ENCODE measurements at regions of chr5 and their contacts with region 1.

Region 1: DNA sequence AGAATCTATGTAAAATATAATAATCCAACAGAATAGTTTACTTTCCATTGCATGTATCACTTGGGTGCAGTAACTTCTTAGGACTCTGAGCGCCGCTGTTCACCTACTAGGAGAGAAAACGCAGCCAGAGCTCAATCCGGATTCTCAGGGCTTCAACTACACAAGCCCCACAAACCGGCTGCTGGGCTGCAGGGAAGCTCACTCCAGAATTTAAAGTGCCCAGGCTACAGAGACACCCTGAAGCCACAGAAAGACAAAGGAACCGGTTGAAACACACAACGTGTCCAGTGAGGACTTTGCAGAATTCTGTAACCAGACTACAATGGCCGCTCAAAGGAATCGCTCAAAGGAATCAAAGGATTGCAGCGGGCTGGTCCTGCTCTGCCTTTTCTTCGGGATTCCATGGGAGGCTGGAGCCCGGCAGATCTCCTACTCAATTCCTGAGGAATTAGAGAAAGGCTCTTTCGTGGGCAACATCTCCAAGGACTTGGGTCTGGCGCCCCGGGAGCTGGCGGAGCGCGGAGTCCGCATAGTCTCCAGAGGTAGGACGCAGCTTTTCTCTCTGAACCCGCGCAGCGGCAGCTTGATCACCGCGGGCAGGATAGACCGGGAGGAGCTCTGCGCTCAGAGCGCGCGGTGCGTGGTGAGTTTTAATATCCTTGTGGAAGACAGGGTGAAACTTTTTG is at the start of gene PCDHGA10:
- DNase-seq: peak in 1 of 2 experiments; percentile 67
- H3K4me3 ChIP-seq: peak within 1 kb of the TSS; percentile 66 to 82 (median 78)
- H3K27ac ChIP-seq: no peak within 1 kb of the TSS
- H3K4me1 ChIP-seq: no peaks in the 10 kb centered on the region
- H3K27me3 ChIP-seq: peaks cover 0 to 10% (median 6%) of the 10 kb centered on the region in 4 experiments; a peak in 6 of 7 replicates
- CTCF ChIP-seq: peak; percentile 35 to 84 (median 74)
- EP300 ChIP-seq: no peak
- POLR2A ChIP-seq: 0 out of 3 replicates have a peak, but pooled peaks of 1 of the 2 experiments have one; percentile 24
- RAD21 ChIP-seq: peak; percentile 84
- total RNA-seq, gene PCDHGA10: 2.1 and 2.2 TPM in 2 replicates

Region 2: GRCh38 chr5:141186897-141187512 is 226.0 kb before region 1 on chr5 and contains the start of gene PCDHB9:
- CTCF ChIA-PET with region 1: interaction called, 15 read pairs
- POLR2A ChIA-PET with region 1: no interaction called
- DNase-seq: peak in 1 of 2 experiments; percentile 80
- H3K4me3 ChIP-seq: peak within 1 kb of the TSS in 2 of 4 experiments; percentile 11 to 27; a peak in 1 of 8 replicates
- H3K27ac ChIP-seq: no peak within 1 kb of the TSS
- H3K4me1 ChIP-seq: 0 out of 7 replicates have a peak, but pooled peaks cover 0 to 2% (median 0%) of the 10 kb centered on the region in 4 experiments
- H3K27me3 ChIP-seq: no peaks in the 10 kb centered on the region
- CTCF ChIP-seq: peak; percentile 53 to 83 (median 81)
- EP300 ChIP-seq: no peak
- POLR2A ChIP-seq: no peak
- RAD21 ChIP-seq: peak; percentile 52 to 61
- total RNA-seq, gene PCDHB9: 1.6 and 3.8 TPM in 2 replicates

Region 3: DNA sequence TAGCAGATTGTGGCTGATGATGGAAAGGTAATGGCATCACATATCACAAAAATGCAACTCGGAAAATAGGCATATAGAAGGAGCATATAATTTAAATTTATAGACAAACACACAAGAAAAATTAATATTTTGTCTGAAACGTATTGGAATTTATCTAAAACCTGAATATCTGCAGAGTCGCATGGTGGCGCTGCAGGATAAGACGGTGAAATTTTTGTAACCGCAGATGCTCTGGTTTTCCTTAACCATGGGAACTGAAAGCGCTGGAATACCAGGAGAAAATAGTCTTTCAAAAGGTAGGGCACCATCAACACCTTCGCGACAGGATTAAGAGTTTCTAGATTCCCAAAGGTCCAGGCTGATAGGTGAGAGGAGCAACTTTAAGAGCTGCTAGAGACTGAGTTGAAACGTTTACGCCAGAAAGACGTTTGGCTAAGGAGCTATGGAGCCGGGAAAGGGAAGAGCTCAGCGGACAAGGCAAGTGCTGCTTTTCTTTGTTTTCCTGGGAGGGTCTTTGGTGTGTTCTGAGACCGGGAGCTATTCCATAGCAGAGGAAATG is 178.8 kb before region 1 on chr5:
- CTCF ChIA-PET with region 1: interaction called, 10 read pairs
- POLR2A ChIA-PET with region 1: no interaction called
- DNase-seq: no peak
- H3K4me3 ChIP-seq: no peak overlapping the region
- H3K27ac ChIP-seq: no peak overlapping the region
- H3K4me1 ChIP-seq: no peaks in the 10 kb centered on the region
- H3K27me3 ChIP-seq: no peaks in the 10 kb centered on the region
- CTCF ChIP-seq: no peak
- EP300 ChIP-seq: no peak
- POLR2A ChIP-seq: no peak
- RAD21 ChIP-seq: peak; percentile 37 to 59

Region 4: DNA sequence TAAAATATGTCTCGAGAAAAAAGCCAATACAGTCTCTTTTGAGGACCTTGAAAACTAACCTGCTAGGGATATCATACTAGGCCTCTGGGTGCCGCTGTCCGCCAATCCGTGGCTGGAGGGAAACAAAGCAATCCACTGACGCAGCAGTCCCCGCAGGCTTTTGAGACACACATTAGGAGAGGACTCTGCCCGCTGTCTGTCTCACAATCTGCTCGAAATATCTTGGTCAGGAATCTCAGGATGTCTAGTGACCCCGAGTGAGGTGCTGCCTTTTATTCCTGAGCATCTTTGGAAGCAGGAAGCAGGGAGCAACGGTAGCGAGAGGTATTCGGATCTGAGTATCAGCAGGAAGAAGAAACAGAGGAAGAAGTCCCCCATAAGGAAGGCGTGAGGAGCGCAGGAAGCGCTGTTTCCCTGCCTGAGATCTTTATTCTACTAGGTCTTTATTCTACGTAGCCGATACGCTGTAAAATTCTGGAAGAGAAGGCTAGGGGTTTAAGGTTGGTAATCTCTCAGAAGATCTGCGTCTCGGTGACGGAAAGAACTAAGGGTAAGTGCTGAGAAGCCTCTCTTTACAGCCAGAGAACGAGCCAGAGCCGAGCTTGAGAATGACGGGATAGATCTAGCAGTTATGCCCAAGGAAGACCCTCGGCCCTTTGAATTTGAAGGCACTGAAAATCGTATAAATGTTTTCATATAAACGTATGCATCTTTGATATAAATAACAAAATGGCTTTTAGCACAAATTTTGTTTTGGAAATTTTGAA is 86.7 kb before region 1 on chr5:
- CTCF ChIA-PET with region 1: interaction called, 23 read pairs
- POLR2A ChIA-PET with region 1: no interaction called
- DNase-seq: peak in 1 of 2 experiments; percentile 73
- H3K4me3 ChIP-seq: peak overlapping the region; percentile 31 to 54 (median 50)
- H3K27ac ChIP-seq: no peak overlapping the region
- H3K4me1 ChIP-seq: no peaks in the 10 kb centered on the region
- H3K27me3 ChIP-seq: no peaks in the 10 kb centered on the region
- CTCF ChIP-seq: peak; percentile 58 to 74 (median 71)
- EP300 ChIP-seq: no peak
- POLR2A ChIP-seq: peak in 1 of 2 experiments; percentile 56; a peak in 1 of 3 replicates
- RAD21 ChIP-seq: peak; percentile 47 to 63

Region 5: GRCh38 chr5:141387233-141387949 is 25.6 kb before region 1 on chr5 and contains the start of gene PCDHGB4:
- CTCF ChIA-PET with region 1: interaction called, 68 read pairs
- POLR2A ChIA-PET with region 1: no interaction called
- DNase-seq: peak in 1 of 2 experiments; percentile 82
- H3K4me3 ChIP-seq: peak within 1 kb of the TSS; percentile 42 to 69 (median 44); a peak in 7 of 8 replicates
- H3K27ac ChIP-seq: no peak within 1 kb of the TSS
- H3K4me1 ChIP-seq: no peaks in the 10 kb centered on the region
- H3K27me3 ChIP-seq: no peaks in the 10 kb centered on the region; a peak in 1 of 7 replicates
- CTCF ChIP-seq: peak; percentile 56 to 66 (median 65)
- EP300 ChIP-seq: no peak
- POLR2A ChIP-seq: no peak
- RAD21 ChIP-seq: peak; percentile 59 to 67
- total RNA-seq, gene PCDHGB4: 7.8 and 9.1 TPM in 2 replicates

Region 6: GRCh38 chr5:141439411-141440141 is 26.6 kb after region 1 on chr5:
- CTCF ChIA-PET with region 1: interaction called, 67 read pairs
- POLR2A ChIA-PET with region 1: no interaction called
- DNase-seq: no peak
- H3K4me3 ChIP-seq: no peak overlapping the region
- H3K27ac ChIP-seq: no peak overlapping the region
- H3K4me1 ChIP-seq: no peaks in the 10 kb centered on the region
- H3K27me3 ChIP-seq: no peaks in the 10 kb centered on the region
- CTCF ChIP-seq: no peak
- EP300 ChIP-seq: no peak
- POLR2A ChIP-seq: no peak
- RAD21 ChIP-seq: peak in 1 of 2 experiments; percentile 33; a peak in 2 of 4 replicates

Region 7: GRCh38 chr5:141557681-141558136 is 144.7 kb after region 1 on chr5:
- CTCF ChIA-PET with region 1: interaction called, 66 read pairs
- POLR2A ChIA-PET with region 1: interaction called, 5 read pairs
- DNase-seq: peak; percentile 82 to 89
- H3K4me3 ChIP-seq: peak overlapping the region in 1 of 4 experiments; percentile 25; a peak in 2 of 8 replicates
- H3K27ac ChIP-seq: peak overlapping the region; percentile 90
- H3K4me1 ChIP-seq: peaks cover 3 to 18% (median 6%) of the 10 kb centered on the region in 4 experiments; a peak in 6 of 7 replicates
- H3K27me3 ChIP-seq: no peaks in the 10 kb centered on the region
- CTCF ChIP-seq: peak; percentile 65 to 85 (median 81)
- EP300 ChIP-seq: peak in 1 of 2 experiments; percentile 54; a peak in 1 of 3 replicates
- POLR2A ChIP-seq: peak; percentile 44 to 60
- RAD21 ChIP-seq: peak; percentile 84 to 87

Region 8: GRCh38 chr5:141701360-141702119 is 288.5 kb after region 1 on chr5:
- CTCF ChIA-PET with region 1: no interaction called
- POLR2A ChIA-PET with region 1: no interaction called
- DNase-seq: no peak
- H3K4me3 ChIP-seq: peak overlapping the region in 1 of 4 experiments; percentile 73; a peak in 1 of 8 replicates
- H3K27ac ChIP-seq: no peak overlapping the region
- H3K4me1 ChIP-seq: peaks cover 5 to 9% (median 5%) of the 10 kb centered on the region in 4 experiments
- H3K27me3 ChIP-seq: peaks cover 0 to 36% (median 30%) of the 10 kb centered on the region in 4 experiments; a peak in 6 of 7 replicates
- CTCF ChIP-seq: no peak
- EP300 ChIP-seq: no peak
- POLR2A ChIP-seq: no peak
- RAD21 ChIP-seq: no peak

Measured in H1 (cell line).